ENCODE measurements at regions of chr2 and their contacts with region 1.

Region 1: DNA sequence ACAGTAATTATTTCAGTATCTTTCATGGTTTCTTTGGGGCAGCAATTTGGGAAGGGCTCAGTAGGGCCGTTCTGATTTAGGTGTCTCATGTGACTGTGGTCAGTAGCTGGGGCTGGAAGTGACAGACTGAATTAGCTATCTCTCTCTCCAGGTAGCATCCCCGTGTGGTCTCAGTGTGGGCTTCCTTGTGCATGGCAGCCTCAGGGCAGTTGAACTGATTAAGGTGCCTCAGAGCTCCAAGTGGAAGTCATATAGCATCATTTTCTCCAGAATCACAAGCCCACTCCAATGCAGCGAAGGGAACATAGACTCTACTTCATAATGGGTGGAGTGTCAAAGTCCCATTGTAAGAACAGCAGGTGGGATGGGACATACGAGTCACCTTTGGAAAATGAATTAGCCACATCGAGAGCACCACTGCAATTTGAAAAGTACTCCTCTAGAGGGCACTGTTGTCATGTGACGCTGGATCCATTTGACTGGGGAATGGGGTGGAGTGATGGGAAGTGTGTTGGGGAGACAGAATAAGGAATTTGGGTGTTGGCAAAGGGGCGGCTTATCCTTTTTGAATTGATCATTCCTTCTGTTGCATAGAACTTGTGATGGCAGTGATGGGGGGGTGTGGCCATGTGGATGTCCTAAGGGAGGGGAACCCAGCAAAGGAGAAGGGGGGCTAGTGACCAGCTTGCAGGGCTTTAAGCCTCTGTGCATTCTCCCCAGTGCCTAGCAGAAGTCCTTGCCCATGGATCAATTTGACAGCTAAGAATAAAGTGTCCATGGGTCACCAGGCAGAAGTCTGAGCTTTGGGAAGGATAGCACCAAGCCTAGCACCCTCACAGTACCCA is 39.3 kb upstream of the FAM136A start:
- DNase-seq: peak in 1 of 2 experiments; percentile 68
- H3K4me3 ChIP-seq: no peak overlapping the region
- H3K27ac ChIP-seq: no peak overlapping the region
- H3K4me1 ChIP-seq: no peaks in the 10 kb centered on the region
- H3K27me3 ChIP-seq: peaks cover 0 to 3% (median 0%) of the 10 kb centered on the region in 4 experiments; a peak in 2 of 7 replicates
- CTCF ChIP-seq: peak; percentile 42 to 89 (median 89)
- EP300 ChIP-seq: no peak
- POLR2A ChIP-seq: no peak
- RAD21 ChIP-seq: peak; percentile 97 to 99

Region 2: DNA sequence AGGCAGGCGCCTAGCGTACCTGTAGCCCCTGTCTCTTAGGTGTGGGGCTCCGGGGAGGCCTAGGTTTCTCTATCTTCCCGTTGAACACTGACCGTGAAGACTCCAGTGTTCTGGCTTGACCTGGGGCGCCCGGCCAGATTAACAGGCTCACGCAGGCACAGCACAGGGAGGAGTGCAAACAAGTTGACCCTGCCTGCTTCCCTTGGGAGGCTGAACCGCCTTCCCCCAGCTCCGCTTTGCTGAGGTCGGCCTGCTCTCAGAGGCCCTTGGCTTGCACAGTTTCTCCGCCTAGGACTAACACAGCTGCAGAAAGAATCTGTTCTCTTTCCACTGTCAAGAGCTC is 82.6 kb before region 1 on chr2:
- CTCF ChIA-PET with region 1: no interaction called
- POLR2A ChIA-PET with region 1: no interaction called
- DNase-seq: peak in 1 of 2 experiments; percentile 63
- H3K4me3 ChIP-seq: peak overlapping the region; percentile 76 to 87 (median 78)
- H3K27ac ChIP-seq: no peak overlapping the region
- H3K4me1 ChIP-seq: peaks cover 0 to 8% (median 3%) of the 10 kb centered on the region in 4 experiments; a peak in 5 of 7 replicates
- H3K27me3 ChIP-seq: no peaks in the 10 kb centered on the region
- CTCF ChIP-seq: no peak
- EP300 ChIP-seq: no peak
- POLR2A ChIP-seq: no peak
- RAD21 ChIP-seq: no peak

Region 3: DNA sequence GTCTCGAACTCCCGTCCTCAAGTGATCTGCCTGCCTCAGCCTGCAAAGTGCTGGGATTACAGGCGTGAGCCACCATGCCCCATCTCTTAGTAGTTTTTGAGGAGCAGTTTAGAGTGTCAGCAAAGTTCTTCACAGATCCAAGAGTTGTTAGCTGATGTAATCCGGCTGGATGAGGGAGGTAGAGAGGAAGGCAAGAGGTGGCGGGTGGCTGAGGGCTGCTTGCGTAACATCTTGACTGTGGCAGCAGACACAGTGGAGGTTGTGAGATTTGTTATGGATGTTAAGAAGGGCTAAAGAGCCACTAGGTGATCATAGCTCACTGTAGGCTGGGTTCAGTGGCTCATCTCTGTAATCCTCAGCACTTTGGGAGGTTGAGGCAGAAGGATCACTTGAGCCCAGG is 19.8 kb before region 1 on chr2:
- CTCF ChIA-PET with region 1: interaction called, 16 read pairs
- POLR2A ChIA-PET with region 1: no interaction called
- DNase-seq: no peak
- H3K4me3 ChIP-seq: no peak overlapping the region
- H3K27ac ChIP-seq: no peak overlapping the region
- H3K4me1 ChIP-seq: no peaks in the 10 kb centered on the region
- H3K27me3 ChIP-seq: no peaks in the 10 kb centered on the region
- CTCF ChIP-seq: no peak
- EP300 ChIP-seq: no peak
- POLR2A ChIP-seq: no peak
- RAD21 ChIP-seq: no peak

Region 4: DNA sequence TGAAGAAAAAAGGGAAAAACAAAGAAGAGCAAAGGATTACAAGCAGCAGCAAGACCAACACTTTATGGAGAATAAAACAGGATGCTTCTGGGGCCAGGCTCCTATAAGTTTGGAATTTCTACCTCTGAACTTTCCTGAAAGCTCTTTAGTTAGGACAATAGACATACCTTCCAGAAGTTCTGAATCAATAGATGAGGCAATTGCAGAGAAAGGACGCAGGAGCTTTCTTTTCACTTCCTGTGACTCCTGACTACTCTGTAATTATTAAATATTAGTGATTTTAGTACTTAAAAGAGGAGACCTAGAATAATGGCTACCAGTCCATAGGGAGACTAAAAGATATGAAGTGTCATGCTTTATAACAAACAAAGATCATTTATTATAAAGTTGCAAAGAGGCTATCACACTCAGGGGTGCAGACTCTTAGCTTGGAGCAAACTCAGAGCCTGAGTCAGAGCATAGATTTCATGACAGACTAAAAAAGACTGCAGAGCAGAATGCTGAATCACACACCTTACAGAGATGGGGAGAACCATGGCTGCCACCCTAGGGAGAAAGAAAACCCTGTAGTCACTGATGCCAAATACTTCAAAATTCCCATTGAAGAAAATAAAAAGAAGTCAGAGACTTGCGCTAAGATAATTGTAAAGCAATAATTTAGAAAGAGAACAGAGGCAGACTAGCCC is 13.3 kb after region 1 on chr2:
- CTCF ChIA-PET with region 1: interaction called, 13 read pairs
- POLR2A ChIA-PET with region 1: no interaction called
- DNase-seq: no peak
- H3K4me3 ChIP-seq: no peak overlapping the region
- H3K27ac ChIP-seq: no peak overlapping the region
- H3K4me1 ChIP-seq: peaks cover 0 to 3% (median 0%) of the 10 kb centered on the region in 4 experiments; a peak in 1 of 7 replicates
- H3K27me3 ChIP-seq: no peaks in the 10 kb centered on the region
- CTCF ChIP-seq: no peak
- EP300 ChIP-seq: no peak
- POLR2A ChIP-seq: no peak
- RAD21 ChIP-seq: no peak

Region 5: GRCh38 chr2:70385966-70386595 is 44.9 kb after region 1 on chr2:
- CTCF ChIA-PET with region 1: interaction called, 12 read pairs
- POLR2A ChIA-PET with region 1: no interaction called
- DNase-seq: peak; percentile 31 to 76
- H3K4me3 ChIP-seq: no peak overlapping the region
- H3K27ac ChIP-seq: no peak overlapping the region
- H3K4me1 ChIP-seq: no peaks in the 10 kb centered on the region
- H3K27me3 ChIP-seq: no peaks in the 10 kb centered on the region; a peak in 3 of 7 replicates
- CTCF ChIP-seq: peak; percentile 47 to 74 (median 48)
- EP300 ChIP-seq: no peak
- POLR2A ChIP-seq: no peak
- RAD21 ChIP-seq: peak; percentile 71 to 83

Region 6: GRCh38 chr2:70616168-70616694 is 275.1 kb after region 1 on chr2:
- CTCF ChIA-PET with region 1: interaction called, 38 read pairs
- POLR2A ChIA-PET with region 1: no interaction called
- DNase-seq: no peak
- H3K4me3 ChIP-seq: no peak overlapping the region
- H3K27ac ChIP-seq: no peak overlapping the region
- H3K4me1 ChIP-seq: peaks cover 1 to 6% (median 2%) of the 10 kb centered on the region in 4 experiments; a peak in 5 of 7 replicates
- H3K27me3 ChIP-seq: no peaks in the 10 kb centered on the region; a peak in 1 of 7 replicates
- CTCF ChIP-seq: no peak
- EP300 ChIP-seq: no peak
- POLR2A ChIP-seq: no peak
- RAD21 ChIP-seq: no peak

Region 7: DNA sequence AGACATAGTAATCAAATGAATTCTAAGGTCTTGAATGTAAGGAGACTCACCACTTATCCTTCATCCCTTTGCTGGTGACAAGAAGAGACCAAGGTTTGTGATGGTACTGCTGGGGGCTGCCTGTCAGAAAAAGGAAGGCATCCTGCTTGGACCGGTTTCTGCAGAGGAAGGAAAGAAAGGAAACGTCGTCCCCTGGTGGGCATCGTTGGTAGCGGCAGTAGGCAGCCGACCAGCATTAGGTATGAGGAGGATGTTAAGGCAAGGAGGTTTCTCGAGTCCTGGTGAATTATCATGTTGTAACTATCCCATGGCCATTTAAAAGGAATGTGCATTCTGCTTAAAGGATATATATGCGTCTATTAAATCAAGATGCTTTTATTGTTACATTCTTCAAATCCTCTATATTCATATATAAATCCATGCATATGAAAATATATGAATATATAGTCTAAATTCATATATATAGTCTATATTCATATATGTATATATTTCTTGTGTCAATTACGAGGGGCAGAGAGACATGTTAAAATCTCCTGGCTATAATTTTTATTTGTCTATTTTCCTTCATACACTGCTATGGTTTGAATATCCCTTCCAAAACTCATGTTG is 306.8 kb after region 1 on chr2:
- CTCF ChIA-PET with region 1: interaction called, 67 read pairs
- POLR2A ChIA-PET with region 1: interaction called, 3 read pairs
- DNase-seq: peak; percentile 73 to 95
- H3K4me3 ChIP-seq: no peak overlapping the region
- H3K27ac ChIP-seq: no peak overlapping the region
- H3K4me1 ChIP-seq: no peaks in the 10 kb centered on the region
- H3K27me3 ChIP-seq: peaks cover 0 to 3% (median under 1%) of the 10 kb centered on the region in 4 experiments; a peak in 3 of 7 replicates
- CTCF ChIP-seq: peak; percentile 95 to 100 (median 100)
- EP300 ChIP-seq: no peak
- POLR2A ChIP-seq: no peak
- RAD21 ChIP-seq: peak; percentile 98 to 99

Measured in H1 (cell line).